ENCODE measurements at regions of chr2 and their contacts with region 1.

Region 1: GRCh38 chr2:30631051-30631671 is 176.1 kb downstream of the CAPN13 start:
- DNase-seq: peak; percentile 48
- ATAC-seq: peak; percentile 56
- H3K4me3 ChIP-seq: no peak overlapping the region
- H3K27ac ChIP-seq: no peak overlapping the region
- H3K4me1 ChIP-seq: peaks cover 25% of the 10 kb centered on the region
- H3K27me3 ChIP-seq: no peaks in the 10 kb centered on the region
- CTCF ChIP-seq: no peak
- EP300 ChIP-seq: no peak
- POLR2A ChIP-seq: no peak
- RAD21 ChIP-seq: no peak

Region 2: DNA sequence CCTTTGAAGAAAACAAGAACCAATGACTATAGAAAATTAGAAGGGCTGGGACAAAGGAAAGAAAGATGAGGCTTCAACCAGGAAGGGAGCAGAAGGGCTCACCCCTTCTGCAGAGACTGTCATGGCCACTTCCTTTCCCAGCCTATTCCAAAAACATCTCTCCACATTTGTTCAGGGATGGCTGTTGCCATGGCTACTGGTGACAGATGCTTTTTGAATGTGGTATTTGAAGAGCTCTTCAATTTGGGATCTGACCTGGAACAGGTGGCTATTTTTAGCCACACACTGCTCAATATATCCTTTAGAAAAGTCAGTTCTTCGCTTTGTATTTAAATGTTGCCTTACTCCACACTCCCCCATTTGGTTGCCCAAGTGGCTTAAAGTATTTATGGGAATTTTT is 248.2 kb before region 1 on chr2:
- CTCF ChIA-PET with region 1: no interaction called
- POLR2A ChIA-PET with region 1: no interaction called
- RAD21 ChIA-PET with region 1: no interaction called
- SMC1A ChIA-PET with region 1: no interaction called
- in situ Hi-C with region 1: no loop called
- intact Hi-C with region 1: no loop called
- DNase-seq: no peak
- ATAC-seq: no peak
- H3K4me3 ChIP-seq: no peak overlapping the region
- H3K27ac ChIP-seq: no peak overlapping the region
- H3K4me1 ChIP-seq: no peaks in the 10 kb centered on the region
- H3K27me3 ChIP-seq: peaks cover 0 to 3% of the 10 kb centered on the region in 2 experiments; a peak in 1 of 4 replicates
- CTCF ChIP-seq: no peak
- EP300 ChIP-seq: no peak
- POLR2A ChIP-seq: no peak
- RAD21 ChIP-seq: no peak

Region 3: DNA sequence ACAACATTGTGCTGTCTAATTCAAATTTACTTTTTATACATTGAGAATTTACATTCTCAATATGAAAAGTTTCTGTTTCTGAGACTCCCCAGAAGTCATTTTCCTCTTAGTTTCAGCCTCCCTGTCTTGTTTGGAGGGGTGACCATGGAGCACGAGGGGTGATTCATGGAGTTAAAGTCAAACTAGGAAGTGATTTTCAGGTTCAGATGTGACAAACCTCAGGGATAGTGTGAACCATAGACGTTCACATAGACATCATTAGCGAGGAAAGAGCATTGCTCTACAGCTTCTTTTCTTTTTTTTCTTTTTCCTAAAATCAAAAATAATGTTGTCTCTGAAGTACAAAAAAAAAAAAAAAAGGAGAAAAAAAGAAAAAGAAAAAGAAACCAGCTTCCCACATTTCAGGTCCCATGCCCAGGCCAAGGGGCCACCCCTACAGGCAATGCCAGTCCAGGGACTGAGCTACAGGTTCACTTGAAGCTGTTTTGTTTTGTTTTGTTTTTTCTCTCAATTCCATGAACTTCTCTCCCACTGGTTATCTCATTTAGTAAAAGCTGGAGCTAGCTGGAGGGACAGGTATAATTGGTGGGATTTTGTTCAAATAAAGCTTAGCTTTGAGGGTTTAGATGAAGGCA is 202.2 kb before region 1 on chr2:
- CTCF ChIA-PET with region 1: no interaction called
- POLR2A ChIA-PET with region 1: no interaction called
- RAD21 ChIA-PET with region 1: no interaction called
- SMC1A ChIA-PET with region 1: no interaction called
- in situ Hi-C with region 1: no loop called
- intact Hi-C with region 1: no loop called
- DNase-seq: no peak
- ATAC-seq: no peak
- H3K4me3 ChIP-seq: no peak overlapping the region
- H3K27ac ChIP-seq: no peak overlapping the region
- H3K4me1 ChIP-seq: no peaks in the 10 kb centered on the region
- H3K27me3 ChIP-seq: no peaks in the 10 kb centered on the region
- CTCF ChIP-seq: no peak
- EP300 ChIP-seq: no peak
- POLR2A ChIP-seq: no peak
- RAD21 ChIP-seq: no peak

Region 4: DNA sequence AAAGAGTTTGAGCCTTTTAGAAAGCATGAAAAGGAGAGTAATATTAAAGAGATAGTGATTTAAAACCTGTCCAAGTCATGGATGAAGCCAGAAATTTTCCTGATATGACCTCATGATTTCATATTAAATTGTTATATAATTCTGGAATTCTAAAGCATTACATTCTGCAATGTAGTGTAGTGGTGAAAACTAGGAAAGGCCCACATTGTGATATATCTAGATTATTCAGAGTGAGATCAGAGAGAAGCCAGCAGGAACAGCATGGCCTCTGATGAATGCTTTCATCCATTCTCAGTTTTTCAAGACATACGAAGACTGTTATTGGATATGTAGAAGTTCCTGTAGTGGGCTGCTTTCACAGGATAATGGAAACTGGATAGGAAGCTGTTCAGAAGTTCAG is 85.3 kb before region 1 on chr2:
- CTCF ChIA-PET with region 1: no interaction called
- POLR2A ChIA-PET with region 1: no interaction called
- RAD21 ChIA-PET with region 1: no interaction called
- SMC1A ChIA-PET with region 1: no interaction called
- in situ Hi-C with region 1: no loop called
- intact Hi-C with region 1: no loop called
- DNase-seq: no peak
- ATAC-seq: no peak
- H3K4me3 ChIP-seq: no peak overlapping the region
- H3K27ac ChIP-seq: no peak overlapping the region
- H3K4me1 ChIP-seq: no peaks in the 10 kb centered on the region
- H3K27me3 ChIP-seq: no peaks in the 10 kb centered on the region
- CTCF ChIP-seq: no peak
- EP300 ChIP-seq: no peak
- POLR2A ChIP-seq: no peak
- RAD21 ChIP-seq: no peak

Region 5: DNA sequence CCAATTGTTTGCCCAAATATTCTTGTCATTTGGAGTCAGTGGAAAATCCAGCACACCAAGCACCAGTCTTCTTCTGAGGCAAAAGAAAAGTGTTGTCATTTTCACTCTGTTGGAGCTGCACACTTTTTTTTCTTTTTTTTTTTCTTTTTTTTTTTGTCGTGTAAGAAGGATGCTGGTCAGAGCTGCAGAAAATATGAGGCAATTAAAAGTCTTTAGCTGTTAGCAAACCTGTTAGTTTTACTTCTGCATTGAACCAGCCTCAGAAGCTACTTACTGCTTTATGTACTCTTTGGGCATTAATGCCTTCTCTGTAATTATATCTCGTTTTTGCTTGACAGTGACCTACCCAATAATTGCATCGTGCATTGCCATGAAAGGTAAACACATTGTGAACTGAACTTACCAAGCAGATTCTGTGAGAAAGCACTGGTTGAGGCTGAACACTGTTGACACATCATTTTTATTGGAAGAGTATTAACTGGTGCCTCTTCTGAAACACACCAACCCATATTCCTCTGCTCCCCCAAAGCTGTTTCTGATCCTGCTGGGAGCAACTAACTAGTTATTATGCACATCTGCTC is 10.7 kb after region 1 on chr2:
- CTCF ChIA-PET with region 1: interaction called, 12 read pairs
- POLR2A ChIA-PET with region 1: interaction called, 4 read pairs
- RAD21 ChIA-PET with region 1: interaction called, 10 read pairs
- SMC1A ChIA-PET with region 1: interaction called, 14 read pairs
- in situ Hi-C with region 1: no loop called
- intact Hi-C with region 1: no loop called
- DNase-seq: no peak
- ATAC-seq: no peak; the same call in 1 of the 3 replicates
- H3K4me3 ChIP-seq: no peak overlapping the region
- H3K27ac ChIP-seq: no peak overlapping the region
- H3K4me1 ChIP-seq: no peaks in the 10 kb centered on the region
- H3K27me3 ChIP-seq: no peaks in the 10 kb centered on the region
- CTCF ChIP-seq: no peak
- EP300 ChIP-seq: no peak
- POLR2A ChIP-seq: no peak
- RAD21 ChIP-seq: no peak

Region 6: GRCh38 chr2:30653847-30654246 is 22.7 kb after region 1 on chr2:
- CTCF ChIA-PET with region 1: interaction called, 12 read pairs
- POLR2A ChIA-PET with region 1: interaction called, 3 read pairs
- RAD21 ChIA-PET with region 1: interaction called, 3 read pairs
- SMC1A ChIA-PET with region 1: interaction called, 3 read pairs
- in situ Hi-C with region 1: no loop called
- intact Hi-C with region 1: no loop called
- DNase-seq: no peak
- ATAC-seq: peak; percentile 31; the same call in 2 of the 3 replicates
- H3K4me3 ChIP-seq: no peak overlapping the region
- H3K27ac ChIP-seq: no peak overlapping the region
- H3K4me1 ChIP-seq: no peaks in the 10 kb centered on the region
- H3K27me3 ChIP-seq: no peaks in the 10 kb centered on the region; a peak in 1 of 4 replicates
- CTCF ChIP-seq: no peak
- EP300 ChIP-seq: no peak
- POLR2A ChIP-seq: no peak
- RAD21 ChIP-seq: no peak

Region 7: GRCh38 chr2:30871980-30872789 is 241.0 kb after region 1 on chr2:
- CTCF ChIA-PET with region 1: no interaction called
- POLR2A ChIA-PET with region 1: no interaction called
- RAD21 ChIA-PET with region 1: no interaction called
- SMC1A ChIA-PET with region 1: no interaction called
- in situ Hi-C with region 1: no loop called
- intact Hi-C with region 1: no loop called
- DNase-seq: no peak
- ATAC-seq: no peak
- H3K4me3 ChIP-seq: no peak overlapping the region
- H3K27ac ChIP-seq: no peak overlapping the region
- H3K4me1 ChIP-seq: no peaks in the 10 kb centered on the region; the same call in 1 of the 2 replicates
- H3K27me3 ChIP-seq: no peaks in the 10 kb centered on the region
- CTCF ChIP-seq: no peak
- EP300 ChIP-seq: no peak
- POLR2A ChIP-seq: no peak
- RAD21 ChIP-seq: no peak

Measured in GM12878 (cell line).